OCI-LY7 (cell line): ENCODE measurements at regions of chr21 and their contacts with region 1.

Region 1: DNA sequence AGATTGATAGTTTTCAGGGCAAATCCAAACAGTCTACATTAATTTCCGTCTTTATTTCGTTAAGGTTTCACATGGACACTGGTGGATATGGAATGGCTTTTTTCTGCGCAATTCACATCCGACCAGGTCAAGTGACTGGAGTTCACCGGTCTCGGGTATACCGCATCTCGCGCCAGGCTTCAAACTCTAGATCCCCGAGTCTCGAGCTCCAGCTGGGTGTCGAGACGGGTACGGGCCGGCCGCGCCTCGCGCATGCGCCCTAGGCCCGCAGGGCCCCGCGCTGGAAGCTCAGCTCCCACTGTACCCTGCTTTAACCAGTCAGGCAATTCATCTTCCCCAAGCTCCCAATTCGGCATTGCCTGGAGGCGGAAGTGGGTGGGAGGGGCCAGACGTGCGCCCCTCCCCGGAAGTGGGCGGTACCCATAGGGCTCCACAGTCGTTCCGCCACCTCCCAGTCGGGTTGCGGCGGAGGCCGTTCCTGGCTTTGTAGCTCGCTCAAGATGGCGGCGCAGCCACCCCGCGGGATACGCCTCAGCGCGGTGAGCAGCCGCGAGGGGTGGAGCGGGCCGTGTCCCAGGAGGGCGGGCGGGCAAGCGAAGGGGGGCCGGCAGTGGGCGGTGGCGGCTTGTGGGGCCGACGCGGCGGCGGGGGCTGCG is at the start of gene MORC3:
- DNase-seq: peak; percentile 99
- H3K4me3 ChIP-seq: peak within 1 kb of the TSS; percentile 86
- H3K27ac ChIP-seq: peak within 1 kb of the TSS; percentile 75
- H3K4me1 ChIP-seq: peaks cover 28% of the 10 kb centered on the region
- CTCF ChIP-seq: no peak
- total RNA-seq, gene MORC3: 23.0 and 26.4 TPM in 2 replicates

Region 2: GRCh38 chr21:36060159-36060921 is 259.6 kb before region 1 on chr21 and contains the start of gene SETD4:
- CTCF ChIA-PET with region 1: no interaction called
- POLR2A ChIA-PET with region 1: interaction called, 3 read pairs
- intact Hi-C with region 1: loop called (anchors 1 kb)
- DNase-seq: peak; percentile 92
- H3K4me3 ChIP-seq: peak within 1 kb of the TSS; percentile 78
- H3K27ac ChIP-seq: peak within 1 kb of the TSS; percentile 85
- H3K4me1 ChIP-seq: peaks cover 19% of the 10 kb centered on the region
- CTCF ChIP-seq: no peak
- total RNA-seq, gene SETD4: 16.1 and 19.1 TPM in 2 replicates

Region 3: GRCh38 chr21:36149788-36150711 is 169.8 kb before region 1 on chr21:
- CTCF ChIA-PET with region 1: interaction called, 3 read pairs
- POLR2A ChIA-PET with region 1: interaction called, 15 read pairs
- intact Hi-C with region 1: no loop called
- DNase-seq: peak; percentile 89
- H3K4me3 ChIP-seq: peak overlapping the region; percentile 37
- H3K27ac ChIP-seq: peak overlapping the region; percentile 76
- H3K4me1 ChIP-seq: peaks cover 26% of the 10 kb centered on the region
- CTCF ChIP-seq: no peak

Region 4: DNA sequence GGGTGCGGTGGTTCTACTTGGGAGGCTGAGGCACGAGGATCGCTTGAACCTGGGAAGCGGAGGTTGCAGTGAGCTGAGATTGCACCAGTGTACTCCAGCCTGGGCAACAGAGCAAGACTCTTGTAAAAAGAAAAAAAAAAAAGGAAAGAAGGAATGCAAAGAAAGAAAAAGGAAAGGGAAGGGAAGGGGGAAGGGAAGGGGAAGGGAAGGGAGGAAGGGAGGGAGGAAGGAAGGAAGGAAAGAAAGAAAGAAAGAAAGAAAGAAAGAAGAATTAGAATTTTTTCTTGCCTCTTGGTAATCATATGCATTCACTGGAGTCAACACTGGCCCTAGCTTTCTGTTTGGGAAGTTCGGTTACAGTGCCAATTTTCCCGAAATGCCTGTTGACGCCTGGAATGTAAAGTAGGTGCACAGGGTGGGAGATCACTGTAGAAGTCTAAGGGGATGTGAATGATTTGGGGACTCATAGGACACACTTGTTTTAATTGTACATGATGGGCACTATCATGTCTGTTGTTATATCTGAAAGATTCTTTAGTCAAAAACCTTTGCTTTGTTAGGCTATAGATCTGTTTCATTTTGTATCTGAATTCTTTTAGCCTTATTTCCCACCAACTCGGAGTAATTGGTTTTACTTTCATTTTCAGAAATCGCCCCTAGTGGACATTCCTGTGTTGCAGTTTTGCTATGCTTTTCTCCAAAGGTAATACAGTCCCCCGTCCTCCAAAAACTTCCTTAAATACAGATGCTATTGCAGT is 59.7 kb before region 1 on chr21:
- CTCF ChIA-PET with region 1: interaction called, 3 read pairs
- POLR2A ChIA-PET with region 1: interaction called, 56 read pairs
- intact Hi-C with region 1: loop called (anchors 1 kb)
- DNase-seq: peak; percentile 79
- H3K4me3 ChIP-seq: peak overlapping the region; percentile 66
- H3K27ac ChIP-seq: peak overlapping the region; percentile 68
- H3K4me1 ChIP-seq: peaks cover 48% of the 10 kb centered on the region
- CTCF ChIP-seq: peak; percentile 96

Region 5: GRCh38 chr21:36282568-36283230 is 37.2 kb before region 1 on chr21:
- CTCF ChIA-PET with region 1: interaction called, 4 read pairs
- POLR2A ChIA-PET with region 1: interaction called, 23 read pairs
- intact Hi-C with region 1: no loop called
- DNase-seq: no peak
- H3K4me3 ChIP-seq: no peak overlapping the region
- H3K27ac ChIP-seq: peak overlapping the region; percentile 65
- H3K4me1 ChIP-seq: peaks cover 41% of the 10 kb centered on the region
- CTCF ChIP-seq: no peak

Region 6: DNA sequence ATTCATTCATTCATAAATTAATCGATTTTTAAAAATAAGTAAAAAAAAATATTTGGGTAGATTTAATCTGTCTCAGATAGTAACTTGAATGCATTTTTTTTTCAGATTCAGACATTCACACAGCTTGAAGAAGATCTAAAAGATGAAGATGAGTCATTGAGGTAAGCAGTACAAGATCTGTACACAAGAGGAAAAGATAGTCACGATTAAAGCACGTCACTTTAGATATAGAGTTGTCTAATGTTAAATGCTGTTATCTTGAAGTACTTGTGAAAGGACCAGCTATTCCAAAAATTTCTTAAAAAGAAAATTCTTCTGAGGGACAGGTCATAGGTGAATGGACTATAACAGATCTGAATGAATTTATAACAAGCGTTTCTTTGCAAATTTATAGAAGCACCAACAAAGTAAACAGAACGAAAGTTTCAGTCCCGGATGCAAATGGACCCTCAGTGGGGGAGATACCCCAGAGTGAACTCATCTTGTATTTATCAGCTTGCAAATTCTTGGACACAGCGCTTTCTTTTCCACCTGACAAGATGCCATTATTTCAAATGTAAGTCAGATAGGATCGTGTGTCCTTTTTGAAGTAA is 31.1 kb before region 1 on chr21:
- CTCF ChIA-PET with region 1: interaction called, 3 read pairs
- POLR2A ChIA-PET with region 1: interaction called, 23 read pairs
- intact Hi-C with region 1: loop called (anchors 1 kb)
- DNase-seq: no peak
- H3K4me3 ChIP-seq: peak overlapping the region; percentile 57
- H3K27ac ChIP-seq: peak overlapping the region; percentile 96
- H3K4me1 ChIP-seq: peaks cover 39% of the 10 kb centered on the region
- CTCF ChIP-seq: no peak

Region 7: DNA sequence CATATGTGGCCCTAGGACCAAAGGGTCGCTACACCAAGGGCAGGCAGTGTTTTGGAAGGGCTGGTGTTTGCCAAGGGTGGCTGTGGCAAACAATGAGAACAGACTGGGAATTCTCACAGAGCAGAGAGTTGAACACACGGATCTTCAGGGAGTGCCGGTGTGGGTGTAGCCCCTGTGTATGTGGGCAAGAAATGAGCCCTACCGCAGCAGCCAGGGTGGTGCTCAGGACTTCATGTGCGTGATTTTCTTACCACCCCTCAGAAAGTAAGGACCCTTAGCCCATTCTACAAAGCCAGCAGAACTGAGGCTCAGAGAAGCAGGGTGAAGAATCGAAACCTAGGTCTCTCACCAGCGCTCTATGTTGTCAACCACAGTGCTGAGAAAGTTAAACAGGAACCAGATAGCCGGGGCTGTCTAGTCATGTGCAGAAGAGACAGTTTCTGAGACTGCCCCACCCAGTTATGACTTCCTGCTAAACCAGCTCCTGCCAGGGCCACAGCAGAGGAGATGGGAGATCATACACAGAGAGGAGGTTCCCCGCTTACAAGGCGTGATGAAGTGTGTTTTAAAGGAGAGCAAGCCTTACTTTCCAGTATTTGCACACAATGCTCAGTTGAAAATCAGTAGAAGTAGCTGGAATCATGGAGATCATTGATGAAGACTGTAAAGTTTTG is 21.8 kb before region 1 on chr21:
- CTCF ChIA-PET with region 1: interaction called, 4 read pairs
- POLR2A ChIA-PET with region 1: interaction called, 73 read pairs
- intact Hi-C with region 1: loop called (anchors 1 kb)
- DNase-seq: peak; percentile 92
- H3K4me3 ChIP-seq: peak overlapping the region; percentile 60
- H3K27ac ChIP-seq: peak overlapping the region; percentile 77
- H3K4me1 ChIP-seq: peaks cover 38% of the 10 kb centered on the region
- CTCF ChIP-seq: no peak